Activated naive CD4-positive, alpha-beta T cell treated with anti-CD3 and anti-CD28 coated beads for 36 hours (primary cell): ENCODE measurements at regions of chr1 and their contacts with region 1.

Region 1: DNA sequence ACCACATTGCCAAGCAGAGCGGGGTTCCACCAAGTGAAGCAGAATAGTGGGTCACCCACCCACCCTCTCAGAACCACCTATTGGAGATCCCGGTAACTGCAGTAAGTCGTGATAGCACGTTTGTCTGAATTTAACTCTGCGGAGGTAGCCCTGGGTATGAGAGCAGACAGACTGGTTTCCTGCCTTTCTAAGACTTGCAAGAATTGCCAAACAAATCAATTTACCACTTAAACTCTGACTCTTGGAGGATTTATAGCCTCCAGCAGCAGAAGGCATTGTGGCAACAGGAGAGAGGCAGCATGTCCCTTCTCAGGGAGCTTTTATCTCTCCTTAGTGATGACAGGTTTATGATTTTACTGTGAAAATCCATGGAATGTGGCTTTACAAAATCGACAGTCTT is 287.9 kb upstream of the FMN2 start:
- DNase-seq: no peak
- H3K4me3 Mint-ChIP-seq: no peak overlapping the region
- H3K27ac Mint-ChIP-seq: no peak overlapping the region
- H3K4me1 Mint-ChIP-seq: peaks cover 8% of the 10 kb centered on the region
- H3K27me3 Mint-ChIP-seq: no peaks in the 10 kb centered on the region

Region 2: GRCh38 chr1:239308701-239309333 is 495.0 kb before region 1 on chr1:
- CTCF ChIA-PET with region 1: no interaction called
- intact Hi-C with region 1: loop called (anchors 5 kb)
- DNase-seq: peak; percentile 54
- H3K4me3 Mint-ChIP-seq: no peak overlapping the region
- H3K27ac Mint-ChIP-seq: no peak overlapping the region
- H3K4me1 Mint-ChIP-seq: no peaks in the 10 kb centered on the region
- H3K27me3 Mint-ChIP-seq: peaks cover 4% of the 10 kb centered on the region

Region 3: GRCh38 chr1:239483391-239483790 is 320.4 kb before region 1 on chr1:
- CTCF ChIA-PET with region 1: no interaction called
- intact Hi-C with region 1: no loop called
- DNase-seq: no peak
- H3K4me3 Mint-ChIP-seq: no peak overlapping the region
- H3K27ac Mint-ChIP-seq: no peak overlapping the region
- H3K4me1 Mint-ChIP-seq: no peaks in the 10 kb centered on the region
- H3K27me3 Mint-ChIP-seq: no peaks in the 10 kb centered on the region

Region 4: DNA sequence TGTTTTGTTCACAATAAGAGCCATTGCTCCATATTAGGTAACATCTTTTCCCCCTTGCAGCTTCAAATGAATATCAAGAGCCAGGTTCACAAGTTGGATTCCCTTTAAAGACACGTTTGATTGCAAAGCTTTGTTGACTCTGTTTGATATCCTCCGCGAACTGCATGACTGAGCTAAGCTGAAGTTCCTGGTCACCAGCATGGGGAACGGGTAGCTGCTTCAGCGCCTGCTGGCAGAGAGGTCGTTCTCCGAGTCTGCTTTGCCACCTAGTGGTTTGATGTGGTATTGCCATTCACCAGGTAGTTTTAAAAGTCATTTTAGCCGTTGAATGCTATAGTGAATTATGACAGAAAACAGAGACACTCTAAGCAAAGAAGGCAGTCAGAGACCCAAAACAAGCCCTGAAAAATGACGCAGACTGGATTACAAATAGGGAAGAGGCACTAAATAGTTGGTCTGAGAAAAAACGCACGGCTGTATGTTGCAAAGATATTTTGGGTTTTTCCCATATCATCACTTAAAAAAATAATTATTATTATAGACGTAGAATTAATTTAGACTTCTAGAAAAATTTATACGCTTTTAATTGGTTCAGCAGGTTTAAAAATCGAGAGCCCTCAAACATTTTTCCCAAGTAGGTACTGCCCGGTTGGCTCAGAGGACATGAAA is 94.4 kb after region 1 on chr1:
- CTCF ChIA-PET with region 1: no interaction called
- intact Hi-C with region 1: no loop called
- DNase-seq: peak; percentile 86
- H3K4me3 Mint-ChIP-seq: no peak overlapping the region
- H3K27ac Mint-ChIP-seq: no peak overlapping the region
- H3K4me1 Mint-ChIP-seq: peaks cover 2% of the 10 kb centered on the region
- H3K27me3 Mint-ChIP-seq: no peaks in the 10 kb centered on the region